ENCODE measurements at regions of chr11 and their contacts with region 1.

Region 1: GRCh38 chr11:5808500-5809121 is at the start of gene OR52N2:
- DNase-seq: peak; percentile 81
- H3K4me3 ChIP-seq: peak within 1 kb of the TSS; percentile 80
- H3K27ac ChIP-seq: no peak within 1 kb of the TSS
- H3K4me1 ChIP-seq: no peaks in the 10 kb centered on the region
- H3K27me3 ChIP-seq: 0 out of 2 replicates have a peak, but pooled peaks cover 5% of the 10 kb centered on the region
- total RNA-seq, gene OR52N2: not detected in 2 replicates

Region 2: DNA sequence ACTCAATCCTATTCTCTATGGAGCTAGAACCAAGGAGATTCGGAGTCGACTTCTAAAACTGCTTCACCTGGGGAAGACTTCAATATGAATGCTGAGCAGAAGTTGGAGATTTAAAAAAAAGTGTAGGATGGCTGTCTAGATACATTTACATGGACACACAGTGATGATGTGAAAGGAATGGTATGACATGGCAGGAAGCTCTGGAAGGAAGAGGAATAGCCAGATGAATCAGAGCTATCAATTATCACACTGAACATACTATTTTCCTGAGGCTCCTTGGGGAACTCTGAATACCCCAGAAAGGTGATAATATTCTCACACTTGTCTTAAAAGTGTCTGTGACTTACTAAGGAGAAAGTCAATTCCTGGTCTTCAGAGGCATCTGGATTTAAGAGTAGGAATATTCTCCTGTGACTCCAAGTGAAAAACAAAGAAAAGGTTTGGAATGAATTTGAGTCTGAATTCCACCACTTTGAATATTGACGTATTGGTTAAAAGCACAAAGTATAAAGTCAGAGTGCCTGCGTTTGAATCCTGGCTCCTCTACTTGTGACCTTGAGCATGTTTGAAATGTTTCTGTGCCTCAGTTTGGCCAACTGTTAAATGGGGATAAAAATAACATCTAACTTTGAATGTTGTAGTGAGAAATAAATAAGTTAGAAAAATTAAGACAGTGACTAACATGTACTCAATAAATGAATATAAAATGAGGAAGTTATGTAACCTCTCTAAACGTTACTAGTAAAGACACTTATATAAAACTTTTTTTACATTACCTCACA is 318.8 kb before region 1 on chr11:
- in situ Hi-C with region 1: loop called (anchors 10 kb)
- DNase-seq: no peak
- H3K4me3 ChIP-seq: no peak overlapping the region
- H3K27ac ChIP-seq: no peak overlapping the region
- H3K4me1 ChIP-seq: no peaks in the 10 kb centered on the region
- H3K27me3 ChIP-seq: peaks cover 7% of the 10 kb centered on the region; the same call in 1 of the 2 replicates

Region 3: GRCh38 chr11:6196396-6196795 is 387.8 kb after region 1 on chr11:
- in situ Hi-C with region 1: no loop called
- DNase-seq: no peak
- H3K4me3 ChIP-seq: no peak overlapping the region
- H3K27ac ChIP-seq: no peak overlapping the region
- H3K4me1 ChIP-seq: peaks cover 5% of the 10 kb centered on the region
- H3K27me3 ChIP-seq: no peaks in the 10 kb centered on the region